Motor neuron (in vitro differentiated cells): ENCODE measurements at regions of chr9 and their contacts with region 1.

Region 1: GRCh38 chr9:29211580-29212396 is 1638.5 kb upstream of the C9orf72 start:
- ATAC-seq: peak; percentile 60 to 81 (median 75)
- H3K4me3 ChIP-seq: peak overlapping the region; percentile 56 to 69 (median 64)
- H3K27ac ChIP-seq: no peak overlapping the region
- H3K4me1 ChIP-seq: no peaks in the 10 kb centered on the region

Region 2: GRCh38 chr9:27701587-27701986 is 1510.2 kb before region 1 on chr9:
- in situ Hi-C with region 1: loop called in 1 of 9 experiments (anchors 25 kb)
- ATAC-seq: peak in 2 of 8 experiments; percentile 27 to 42
- H3K4me3 ChIP-seq: no peak overlapping the region
- H3K27ac ChIP-seq: no peak overlapping the region
- H3K4me1 ChIP-seq: no peaks in the 10 kb centered on the region

Region 3: DNA sequence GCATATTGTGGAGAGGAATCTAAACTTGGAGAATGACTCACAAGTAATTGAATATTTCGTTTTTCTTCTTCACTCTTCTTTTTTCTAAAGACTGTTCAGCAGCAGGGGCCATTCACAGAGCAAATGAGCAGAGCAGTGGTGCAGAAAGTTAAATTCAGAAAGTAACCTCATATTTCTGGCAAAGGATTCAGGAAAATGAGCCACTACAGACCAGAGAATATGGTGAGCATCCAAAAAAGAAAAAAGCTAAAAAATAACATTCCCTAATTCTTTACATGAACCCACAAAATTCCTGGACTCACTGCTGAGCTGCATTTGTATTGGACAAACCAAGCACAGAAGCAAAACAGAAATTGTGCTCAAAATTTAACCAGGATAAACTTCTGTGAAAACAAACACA is 151.7 kb before region 1 on chr9:
- in situ Hi-C with region 1: no loop called
- ATAC-seq: no peak
- H3K4me3 ChIP-seq: no peak overlapping the region
- H3K27ac ChIP-seq: no peak overlapping the region
- H3K4me1 ChIP-seq: no peaks in the 10 kb centered on the region

Region 4: GRCh38 chr9:29129763-29130162 is 82.0 kb before region 1 on chr9:
- in situ Hi-C with region 1: no loop called
- ATAC-seq: no peak
- H3K4me3 ChIP-seq: no peak overlapping the region
- H3K27ac ChIP-seq: no peak overlapping the region
- H3K4me1 ChIP-seq: no peaks in the 10 kb centered on the region